ENCODE measurements at regions of chr2 and their contacts with region 1.

Region 1: DNA sequence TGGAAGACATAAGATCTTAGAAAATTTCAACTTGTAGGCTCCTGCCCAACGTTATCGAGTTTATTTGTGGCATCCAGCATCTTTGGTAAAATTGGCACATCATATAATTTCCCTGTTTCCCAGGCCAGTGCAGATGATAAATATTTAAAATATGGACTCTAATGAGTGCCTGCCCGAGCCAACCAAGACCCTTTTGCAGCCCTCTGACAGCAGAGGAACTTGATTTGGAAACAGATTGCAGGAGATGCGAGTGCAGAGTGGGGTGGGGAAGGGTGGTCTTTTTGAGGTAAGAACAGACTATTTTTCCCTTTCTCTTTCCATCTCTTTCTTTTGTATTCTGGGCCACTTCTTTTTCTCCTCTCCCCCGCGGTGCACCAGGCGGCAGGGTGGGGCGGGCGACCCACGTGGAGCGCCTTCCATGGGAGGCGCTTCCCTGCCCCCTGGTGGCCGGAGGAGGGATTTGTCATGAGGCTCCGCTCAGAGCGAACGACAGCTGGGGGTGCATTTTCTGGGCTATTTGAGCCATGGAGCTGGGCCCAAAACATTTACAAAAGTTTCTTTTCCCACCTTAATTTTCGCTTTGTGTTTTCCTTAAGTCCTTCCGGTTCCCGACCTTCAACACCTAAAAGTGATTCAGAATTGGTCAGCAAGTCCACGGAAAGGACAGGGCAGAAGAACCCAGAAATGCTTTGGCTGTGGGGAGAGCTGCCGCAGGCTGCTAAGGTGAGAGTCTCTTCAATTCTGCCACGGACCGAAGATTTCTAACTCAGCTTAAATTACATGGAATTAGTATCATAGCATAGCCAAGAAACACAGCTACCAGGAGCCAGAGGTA is 32.7 kb downstream of the LPIN1 start:
- DNase-seq: peak; percentile 84
- H3K4me3 ChIP-seq: peak overlapping the region in 1 of 4 donors; percentile 29
- H3K27ac ChIP-seq: no peak overlapping the region
- H3K4me1 ChIP-seq: peaks cover 0 to 34% (median 6%) of the 10 kb centered on the region in 4 donors
- H3K27me3 ChIP-seq: no peaks in the 10 kb centered on the region
- CTCF ChIP-seq: peak; percentile 96 to 98 (median 98)
- EP300 ChIP-seq: no peak
- POLR2A ChIP-seq: no peak

Region 2: DNA sequence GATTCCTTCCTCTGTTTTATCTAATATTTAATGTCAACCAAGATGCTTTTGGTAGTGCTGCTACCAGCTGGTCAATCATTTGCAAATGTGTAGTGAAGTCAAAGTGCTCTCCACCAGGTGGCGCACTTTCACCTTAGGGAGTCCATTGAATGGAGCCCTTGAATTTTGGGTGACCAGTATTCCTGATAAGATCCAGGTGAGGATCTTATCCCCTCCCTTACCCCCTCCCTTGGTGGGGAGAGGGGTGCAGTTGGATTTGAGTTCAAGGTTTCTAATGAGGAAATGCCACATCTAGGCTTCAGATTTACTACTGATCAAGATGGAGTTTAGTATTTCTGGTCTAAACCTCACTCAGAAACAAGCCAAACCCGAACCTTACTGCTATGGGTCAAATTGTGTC is 301.1 kb before region 1 on chr2:
- in situ Hi-C with region 1: loop called in 3 of 4 experiments (anchors 25 kb)
- intact Hi-C with region 1: no loop called
- DNase-seq: peak; percentile 91
- H3K4me3 ChIP-seq: no peak overlapping the region
- H3K27ac ChIP-seq: no peak overlapping the region
- H3K4me1 ChIP-seq: peaks cover 0 to 7% (median 4%) of the 10 kb centered on the region in 4 donors
- H3K27me3 ChIP-seq: peaks cover 42% of the 10 kb centered on the region
- CTCF ChIP-seq: peak; percentile 82 to 93 (median 88)
- EP300 ChIP-seq: no peak
- POLR2A ChIP-seq: no peak

Region 3: GRCh38 chr2:11688222-11689069 is 90.7 kb before region 1 on chr2:
- in situ Hi-C with region 1: loop called (anchors 5 to 10 kb)
- intact Hi-C with region 1: loop called (anchors 2 kb)
- DNase-seq: peak; percentile 86
- H3K4me3 ChIP-seq: peak overlapping the region in 1 of 4 donors; percentile 1
- H3K27ac ChIP-seq: peak overlapping the region in 3 of 4 donors; percentile 23 to 41 (median 38)
- H3K4me1 ChIP-seq: peaks cover 0 to 22% (median 13%) of the 10 kb centered on the region in 4 donors
- H3K27me3 ChIP-seq: peaks cover 19% of the 10 kb centered on the region
- CTCF ChIP-seq: peak; percentile 75 to 87 (median 81)
- EP300 ChIP-seq: no peak
- POLR2A ChIP-seq: no peak

Region 4: GRCh38 chr2:11753886-11754699 is 25.0 kb before region 1 on chr2:
- in situ Hi-C with region 1: no loop called
- intact Hi-C with region 1: loop called (anchors 1 kb)
- DNase-seq: peak; percentile 65
- H3K4me3 ChIP-seq: peak overlapping the region in 3 of 4 donors; percentile 7 to 36 (median 24)
- H3K27ac ChIP-seq: peak overlapping the region; percentile 84 to 92 (median 86)
- H3K4me1 ChIP-seq: peaks cover 15 to 51% (median 26%) of the 10 kb centered on the region in 4 donors
- H3K27me3 ChIP-seq: no peaks in the 10 kb centered on the region
- CTCF ChIP-seq: no peak
- EP300 ChIP-seq: no peak
- POLR2A ChIP-seq: peak; percentile 19